Common myeloid progenitor, CD34-positive (primary cell): ENCODE measurements at regions of chr11 and their contacts with region 1.

Region 1: GRCh38 chr11:93718057-93718563 is 23.2 kb downstream of the TAF1D start:
- DNase-seq: peak; percentile 94 to 97 (median 94)
- H3K4me3 ChIP-seq: peak overlapping the region in 2 of 7 experiments; percentile 19 to 51
- H3K27ac ChIP-seq: peak overlapping the region; percentile 89 to 95
- H3K4me1 ChIP-seq: peaks cover 14 to 44% (median 35%) of the 10 kb centered on the region in 4 experiments
- H3K27me3 ChIP-seq: no peaks in the 10 kb centered on the region

Region 2: DNA sequence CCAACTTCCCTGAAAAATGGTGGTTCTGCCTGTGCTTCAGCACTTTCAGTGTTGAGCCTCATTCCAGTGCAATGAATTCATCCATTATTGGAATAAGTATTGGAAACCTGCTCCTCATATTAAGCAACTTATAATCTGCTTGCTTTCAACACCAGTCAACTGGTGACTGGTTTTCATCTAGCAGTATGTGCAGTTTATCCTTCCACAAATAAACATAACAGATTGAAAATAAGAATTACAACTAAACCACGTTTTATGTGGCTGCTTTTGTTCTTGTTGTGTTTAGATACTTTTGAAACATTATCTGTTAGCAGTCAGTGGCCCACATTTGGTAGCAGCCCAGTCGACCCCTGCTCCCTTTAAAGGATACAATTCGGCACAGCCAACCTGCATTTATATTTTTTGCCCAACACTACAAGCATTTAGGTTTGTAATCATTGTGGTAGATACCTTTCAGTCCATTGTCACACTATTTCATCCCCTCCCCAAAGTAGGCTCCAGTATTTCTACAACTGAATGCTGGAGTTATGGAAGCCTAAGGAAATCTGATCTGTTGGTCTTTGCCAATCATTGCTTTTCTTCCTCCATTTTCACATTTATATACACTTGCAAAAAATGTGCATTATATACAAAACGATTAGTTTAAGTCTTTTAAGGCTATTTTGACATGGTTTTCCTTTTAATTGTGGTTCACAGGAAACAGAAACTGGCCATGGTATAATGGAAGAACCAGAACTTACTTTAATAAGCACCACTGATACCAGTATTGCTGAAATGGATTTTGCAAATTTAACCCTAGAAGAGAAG is 10.1 kb after region 1 on chr11:
- CTCF ChIA-PET with region 1: interaction called, 10 read pairs
- POLR2A ChIA-PET with region 1: interaction called, 3 read pairs
- DNase-seq: no peak
- H3K4me3 ChIP-seq: no peak overlapping the region
- H3K27ac ChIP-seq: no peak overlapping the region
- H3K4me1 ChIP-seq: no peaks in the 10 kb centered on the region
- H3K27me3 ChIP-seq: no peaks in the 10 kb centered on the region